Calu3 (cell line): ENCODE measurements at regions of chr20 and their contacts with region 1.

Region 1: GRCh38 chr20:49219089-49219923 is at the start of gene DDX27:
- DNase-seq: peak; percentile 99
- H3K4me3 Mint-ChIP-seq: peak within 1 kb of the TSS; percentile 95
- H3K27ac Mint-ChIP-seq: peak within 1 kb of the TSS; percentile 96
- H3K4me1 Mint-ChIP-seq: peaks cover 14% of the 10 kb centered on the region
- H3K27me3 Mint-ChIP-seq: no peaks in the 10 kb centered on the region
- CTCF ChIP-seq: no peak
- total RNA-seq, gene DDX27: 87.3 and 96.0 TPM in 2 replicates

Region 2: DNA sequence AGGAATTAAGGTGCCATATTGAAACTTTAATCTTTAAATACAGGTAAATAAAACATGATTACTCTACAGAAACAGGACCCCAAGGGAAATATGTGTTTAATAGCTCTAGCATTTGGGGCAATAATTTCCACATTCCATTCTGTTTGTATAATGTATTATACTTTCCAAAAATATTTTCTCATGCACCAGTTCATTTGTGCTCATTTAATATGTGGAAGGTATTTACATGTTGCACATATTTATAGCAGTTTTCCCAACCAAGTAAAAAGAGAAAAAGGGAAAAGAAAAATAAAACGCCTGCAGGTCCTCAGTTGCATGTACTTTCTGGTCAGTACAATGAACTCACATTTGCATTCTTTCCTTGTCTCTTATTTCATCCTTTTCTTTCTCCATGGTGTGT is 1304.5 kb before region 1 on chr20:
- CTCF ChIA-PET with region 1: no interaction called
- intact Hi-C with region 1: no loop called
- DNase-seq: no peak
- H3K4me3 Mint-ChIP-seq: no peak overlapping the region
- H3K27ac Mint-ChIP-seq: peak overlapping the region; percentile 3
- H3K4me1 Mint-ChIP-seq: peaks cover 35% of the 10 kb centered on the region
- H3K27me3 Mint-ChIP-seq: no peaks in the 10 kb centered on the region
- CTCF ChIP-seq: no peak

Region 3: GRCh38 chr20:49132995-49133478 is 86.3 kb before region 1 on chr20:
- CTCF ChIA-PET with region 1: interaction called, 36 read pairs
- intact Hi-C with region 1: loop called (anchors 1 kb)
- DNase-seq: peak; percentile 62
- H3K4me3 Mint-ChIP-seq: no peak overlapping the region
- H3K27ac Mint-ChIP-seq: no peak overlapping the region
- H3K4me1 Mint-ChIP-seq: no peaks in the 10 kb centered on the region
- H3K27me3 Mint-ChIP-seq: no peaks in the 10 kb centered on the region
- CTCF ChIP-seq: peak; percentile 32

Region 4: GRCh38 chr20:49179368-49180277 is 39.7 kb before region 1 on chr20:
- CTCF ChIA-PET with region 1: interaction called, 31 read pairs
- intact Hi-C with region 1: no loop called
- DNase-seq: no peak
- H3K4me3 Mint-ChIP-seq: peak overlapping the region; percentile 15
- H3K27ac Mint-ChIP-seq: peak overlapping the region; percentile 54
- H3K4me1 Mint-ChIP-seq: peaks cover 40% of the 10 kb centered on the region
- H3K27me3 Mint-ChIP-seq: no peaks in the 10 kb centered on the region
- CTCF ChIP-seq: no peak

Region 5: DNA sequence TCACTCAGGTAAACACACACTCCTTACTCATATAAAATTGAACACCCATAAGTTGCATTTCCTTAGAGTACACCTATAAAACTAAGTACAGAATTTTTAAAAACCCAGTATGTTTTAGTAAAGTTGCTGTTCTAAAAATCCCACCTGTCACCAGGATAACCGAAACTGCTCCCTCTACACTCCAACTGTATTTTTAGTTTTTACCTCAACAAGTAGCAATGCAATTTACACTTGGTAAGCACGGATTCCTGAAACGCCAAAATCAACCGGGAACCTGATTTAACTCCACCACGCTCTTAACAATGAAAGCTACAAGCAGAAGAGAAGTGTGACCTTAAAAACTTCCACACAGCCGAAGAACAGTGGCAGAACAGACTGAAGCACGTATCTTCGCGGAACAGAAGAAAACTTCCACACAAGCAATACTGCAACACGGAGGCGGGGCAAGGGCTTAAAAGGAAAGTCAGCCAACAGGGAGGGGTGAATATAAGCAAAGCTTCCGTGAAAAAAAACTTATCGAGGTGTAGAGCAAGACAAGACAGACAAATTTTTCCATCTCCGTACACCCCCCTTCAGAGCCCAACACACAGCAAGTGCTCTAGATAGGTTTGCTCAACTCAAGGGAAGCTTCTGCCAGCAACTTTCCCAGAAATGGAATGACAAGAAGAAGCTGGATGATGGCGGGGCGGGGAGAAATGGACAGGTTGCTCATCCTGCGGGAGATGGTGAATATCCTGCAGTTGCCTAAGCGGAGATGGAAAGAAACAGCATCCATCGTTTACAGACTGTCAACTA is 32.6 kb before region 1 on chr20:
- CTCF ChIA-PET with region 1: interaction called, 31 read pairs
- intact Hi-C with region 1: loop called (anchors 2 kb)
- DNase-seq: peak; percentile 66
- H3K4me3 Mint-ChIP-seq: peak overlapping the region; percentile 97
- H3K27ac Mint-ChIP-seq: peak overlapping the region; percentile 84
- H3K4me1 Mint-ChIP-seq: peaks cover 36% of the 10 kb centered on the region
- H3K27me3 Mint-ChIP-seq: peaks cover 13% of the 10 kb centered on the region
- CTCF ChIP-seq: no peak

Region 6: DNA sequence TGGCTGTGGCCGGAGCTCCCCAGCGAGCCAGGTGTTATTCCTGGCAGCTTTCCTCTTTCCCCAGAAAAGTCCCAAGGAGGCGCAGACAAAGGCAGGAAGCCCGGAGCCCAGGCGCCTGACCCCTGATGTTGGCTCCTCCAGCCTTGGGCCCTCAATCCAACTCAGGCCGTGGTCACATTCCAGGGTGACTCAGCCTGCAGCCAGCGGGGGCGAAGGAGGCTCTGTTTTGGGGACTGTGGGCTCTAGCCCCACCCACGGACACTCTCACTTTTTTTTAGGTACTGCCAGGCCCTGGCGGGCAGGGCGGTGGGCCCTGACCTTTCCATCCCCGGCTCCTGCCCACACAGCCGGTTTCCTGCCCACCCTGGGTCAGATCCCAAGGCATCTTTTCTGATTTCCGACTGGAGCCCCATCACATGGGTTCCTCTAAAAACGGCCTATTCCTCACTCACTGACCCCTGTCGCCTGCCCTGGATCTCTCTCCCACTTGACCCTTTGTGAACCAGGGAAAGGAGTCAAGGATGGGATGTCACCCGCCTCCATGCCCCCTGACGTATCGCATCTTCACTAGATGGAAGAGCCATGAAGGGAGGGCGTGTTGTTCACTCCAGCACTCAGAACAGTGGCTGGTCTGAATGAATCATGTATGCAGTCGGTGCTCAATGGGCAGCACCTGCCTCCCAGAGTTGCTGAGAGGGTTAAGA is 343.2 kb after region 1 on chr20:
- CTCF ChIA-PET with region 1: no interaction called
- intact Hi-C with region 1: no loop called
- DNase-seq: peak; percentile 73
- H3K4me3 Mint-ChIP-seq: peak overlapping the region; percentile 4
- H3K27ac Mint-ChIP-seq: peak overlapping the region; percentile 5
- H3K4me1 Mint-ChIP-seq: peaks cover 25% of the 10 kb centered on the region
- H3K27me3 Mint-ChIP-seq: no peaks in the 10 kb centered on the region
- CTCF ChIP-seq: no peak